ENCODE measurements at regions of chr1 and their contacts with region 1.

Region 1: DNA sequence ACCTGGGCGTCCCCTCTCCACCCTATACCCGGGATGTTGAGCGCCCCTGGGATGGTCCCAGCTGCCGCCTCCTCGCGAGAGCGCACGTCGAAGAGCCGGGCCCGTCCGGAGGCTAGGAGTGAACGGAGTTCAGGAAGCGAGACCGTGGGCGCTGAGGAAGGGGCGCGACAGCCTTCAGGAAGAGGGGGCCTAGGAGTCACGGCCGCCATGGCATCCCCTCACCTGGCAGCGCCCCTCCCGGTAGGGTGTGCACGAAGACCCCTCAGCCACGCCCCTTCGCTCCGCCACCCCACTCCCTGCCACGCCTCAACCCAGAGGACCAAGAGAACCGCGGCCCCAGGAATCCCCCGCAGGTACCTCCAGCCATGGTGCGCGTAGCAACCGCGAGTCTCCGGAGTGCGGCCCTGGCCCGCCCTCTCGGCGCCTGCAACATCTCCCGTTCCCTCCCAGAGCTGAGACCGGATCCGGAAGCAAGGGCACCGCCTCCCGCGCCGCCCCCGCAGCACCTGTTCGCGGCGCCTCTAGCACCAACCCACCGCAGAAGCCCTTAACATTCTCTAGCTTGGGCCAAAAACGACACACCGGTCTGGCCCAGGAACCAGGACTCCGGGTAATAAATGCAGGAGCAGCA is at the start of gene TSTD1:
- DNase-seq: peak; percentile 71 to 73
- H3K4me3 ChIP-seq: peak within 1 kb of the TSS; percentile 96
- H3K27ac ChIP-seq: peak within 1 kb of the TSS; percentile 5; the same call in 1 of the 2 replicates
- H3K4me1 ChIP-seq: peaks cover 18% of the 10 kb centered on the region
- H3K27me3 ChIP-seq: no peaks in the 10 kb centered on the region
- CTCF ChIP-seq: no peak
- total RNA-seq, gene TSTD1: 51.4 and 70.8 TPM in 2 replicates

Region 2: GRCh38 chr1:161021165-161021960 is 17.3 kb before region 1 on chr1:
- CTCF ChIA-PET with region 1: interaction called, 3 read pairs
- POLR2A ChIA-PET with region 1: interaction called, 8 read pairs
- intact Hi-C with region 1: loop called (anchors 2 kb)
- DNase-seq: peak; percentile 99
- H3K4me3 ChIP-seq: peak overlapping the region; percentile 93
- H3K27ac ChIP-seq: peak overlapping the region; percentile 97
- H3K4me1 ChIP-seq: peaks cover 49% of the 10 kb centered on the region
- H3K27me3 ChIP-seq: no peaks in the 10 kb centered on the region
- CTCF ChIP-seq: no peak